Prostate gland (tissue), 2 donors: ENCODE measurements at regions of chr13 and their contacts with region 1.

Region 1: GRCh38 chr13:23902975-23903905 is 5.9 kb upstream of the C1QTNF9B start:
- DNase-seq: no peak
- H3K4me3 ChIP-seq: no peak overlapping the region
- H3K27ac ChIP-seq: no peak overlapping the region
- H3K4me1 ChIP-seq: no peaks in the 10 kb centered on the region
- H3K27me3 ChIP-seq: no peaks in the 10 kb centered on the region
- CTCF ChIP-seq: no peak
- POLR2A ChIP-seq: no peak

Region 2: GRCh38 chr13:24012648-24013047 is 109.4 kb after region 1 on chr13:
- intact Hi-C with region 1: loop called (anchors 5 kb)
- DNase-seq: no peak
- H3K4me3 ChIP-seq: no peak overlapping the region
- H3K27ac ChIP-seq: no peak overlapping the region
- H3K4me1 ChIP-seq: no peaks in the 10 kb centered on the region
- H3K27me3 ChIP-seq: no peaks in the 10 kb centered on the region
- CTCF ChIP-seq: no peak
- POLR2A ChIP-seq: no peak